ENCODE measurements at regions of chr5 and their contacts with region 1.

Region 1: DNA sequence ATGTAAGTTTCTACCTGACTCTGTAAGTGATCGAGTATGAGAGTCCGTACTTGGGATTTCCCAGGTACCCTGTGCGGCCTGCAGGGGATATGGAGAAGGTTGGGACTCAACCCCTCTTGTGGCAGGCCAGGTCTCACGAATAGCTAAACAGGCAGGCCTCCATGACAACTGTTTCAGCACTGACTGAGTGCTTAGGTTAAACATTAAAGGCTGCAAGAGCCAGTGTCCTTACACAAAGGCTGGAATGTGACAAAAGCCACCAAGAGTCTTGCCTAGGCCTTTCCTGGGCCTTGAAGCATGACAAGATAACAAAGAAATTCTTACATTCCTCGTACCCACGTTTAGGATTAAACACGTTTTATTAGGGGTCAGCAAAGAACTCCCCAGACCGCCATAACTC is 58.6 kb downstream of the THBS4 start:
- DNase-seq: no peak
- H3K4me3 ChIP-seq: no peak overlapping the region
- H3K27ac ChIP-seq: no peak overlapping the region
- H3K4me1 ChIP-seq: no peaks in the 10 kb centered on the region
- H3K27me3 ChIP-seq: no peaks in the 10 kb centered on the region
- CTCF ChIP-seq: no peak
- EP300 ChIP-seq: no peak
- POLR2A ChIP-seq: no peak

Region 2: DNA sequence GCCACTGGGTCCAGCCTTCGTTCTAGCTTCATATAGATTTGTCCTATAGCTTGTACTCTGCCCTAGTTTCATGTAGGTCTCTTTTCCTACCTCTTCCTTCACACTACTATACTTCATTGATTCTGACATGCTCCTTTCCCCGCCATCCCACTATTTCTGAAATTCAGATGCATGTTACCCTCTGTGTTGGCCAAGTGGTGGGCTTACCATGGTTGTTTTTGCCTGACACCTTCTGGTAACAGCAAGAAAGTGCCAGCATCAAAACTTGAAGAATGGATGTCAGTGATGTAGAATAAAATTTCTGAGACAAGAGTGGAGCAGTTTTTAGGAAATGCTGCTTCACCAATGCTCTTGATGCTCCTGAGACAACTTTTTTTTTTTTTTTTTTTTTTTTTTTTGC is 181.6 kb after region 1 on chr5:
- intact Hi-C with region 1: loop called in 2 of 4 experiments (anchors 10 kb)
- DNase-seq: no peak
- H3K4me3 ChIP-seq: no peak overlapping the region
- H3K27ac ChIP-seq: no peak overlapping the region
- H3K4me1 ChIP-seq: no peaks in the 10 kb centered on the region
- H3K27me3 ChIP-seq: no peaks in the 10 kb centered on the region
- CTCF ChIP-seq: peak; percentile 17 to 39 (median 31)
- EP300 ChIP-seq: no peak
- POLR2A ChIP-seq: no peak

Region 3: DNA sequence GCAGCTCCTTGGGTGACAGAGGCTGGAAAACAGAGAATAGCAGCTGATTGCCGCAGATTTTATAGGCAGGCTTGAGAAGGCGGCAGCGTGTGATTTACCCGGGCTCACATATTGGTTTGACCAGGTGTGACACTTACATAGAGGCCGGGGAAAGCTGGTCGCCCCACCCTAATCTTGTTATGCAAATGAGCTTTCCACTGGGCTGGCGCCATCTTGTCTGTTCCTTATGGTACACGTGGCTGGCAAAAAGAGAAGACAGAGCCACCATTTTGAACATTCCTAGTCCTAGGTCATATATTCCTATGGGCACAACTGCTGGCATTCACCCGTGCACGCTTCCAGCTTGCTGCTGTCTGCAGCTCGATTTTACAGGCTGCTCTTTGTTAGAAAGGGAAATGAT is 214.7 kb after region 1 on chr5:
- intact Hi-C with region 1: loop called in 2 of 4 experiments (anchors 5 kb)
- DNase-seq: no peak
- H3K4me3 ChIP-seq: no peak overlapping the region
- H3K27ac ChIP-seq: no peak overlapping the region
- H3K4me1 ChIP-seq: no peaks in the 10 kb centered on the region
- H3K27me3 ChIP-seq: no peaks in the 10 kb centered on the region
- CTCF ChIP-seq: no peak
- EP300 ChIP-seq: no peak
- POLR2A ChIP-seq: no peak

Region 4: DNA sequence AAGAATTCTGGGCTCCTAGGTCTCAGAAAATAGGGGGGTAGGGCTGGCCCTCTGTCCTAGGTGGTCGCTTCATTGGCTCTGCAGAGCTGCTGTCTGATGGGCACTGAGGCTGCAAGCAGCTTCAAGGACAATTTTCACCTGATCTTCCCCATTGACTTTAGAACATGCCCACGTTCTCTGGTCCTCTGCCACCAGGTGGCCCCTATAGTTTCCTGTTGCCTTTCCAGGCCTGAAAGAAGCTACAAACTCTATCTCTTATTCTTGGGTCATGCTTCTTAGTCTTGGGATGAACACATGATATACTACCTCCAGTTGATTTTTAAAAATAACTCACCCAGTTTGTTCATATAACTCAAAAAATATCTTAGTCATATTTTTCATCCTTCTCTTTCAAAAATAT is 252.3 kb after region 1 on chr5:
- intact Hi-C with region 1: no loop called
- DNase-seq: no peak
- H3K4me3 ChIP-seq: no peak overlapping the region
- H3K27ac ChIP-seq: no peak overlapping the region
- H3K4me1 ChIP-seq: no peaks in the 10 kb centered on the region
- H3K27me3 ChIP-seq: no peaks in the 10 kb centered on the region
- CTCF ChIP-seq: no peak
- EP300 ChIP-seq: no peak
- POLR2A ChIP-seq: no peak

Measured in ovary (tissue), 10 donors.